BJ (cell line): ENCODE measurements at regions of chr7 and their contacts with region 1.

Region 1: DNA sequence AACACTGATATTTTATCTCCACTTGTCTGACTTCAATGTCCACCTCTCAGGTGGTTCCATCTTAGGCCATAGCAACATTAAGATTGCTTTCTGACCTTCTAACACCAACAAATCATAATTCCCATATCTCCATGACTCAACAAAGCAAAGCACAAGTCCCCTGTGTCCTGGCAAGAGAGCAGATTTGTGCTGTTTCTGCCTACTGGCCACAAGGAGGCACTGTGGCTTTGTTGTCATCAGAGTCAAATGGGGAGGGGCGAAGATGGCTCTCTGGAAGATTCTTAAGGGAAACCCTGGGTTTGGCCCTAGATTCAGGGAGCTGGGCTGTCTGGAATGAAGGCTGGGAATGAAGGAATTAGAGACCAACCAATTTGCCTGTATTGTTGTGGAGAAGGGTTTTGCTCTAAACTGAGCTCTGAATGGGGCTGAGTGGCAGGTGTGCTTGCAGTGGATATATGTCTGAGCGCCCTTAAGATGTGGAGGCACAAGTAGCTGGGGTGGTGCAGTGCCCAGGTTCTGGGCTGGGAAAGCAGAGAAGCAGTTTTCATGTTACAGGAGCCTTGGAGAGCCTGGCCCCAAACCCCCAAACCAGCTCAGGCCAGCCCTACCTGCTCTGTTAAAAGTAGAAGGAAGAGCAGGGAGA is 154.8 kb upstream of the PRSS58 start:
- DNase-seq: no peak
- H3K4me3 ChIP-seq: no peak overlapping the region
- H3K27me3 ChIP-seq: no peaks in the 10 kb centered on the region
- CTCF ChIP-seq: peak; percentile 75

Region 2: DNA sequence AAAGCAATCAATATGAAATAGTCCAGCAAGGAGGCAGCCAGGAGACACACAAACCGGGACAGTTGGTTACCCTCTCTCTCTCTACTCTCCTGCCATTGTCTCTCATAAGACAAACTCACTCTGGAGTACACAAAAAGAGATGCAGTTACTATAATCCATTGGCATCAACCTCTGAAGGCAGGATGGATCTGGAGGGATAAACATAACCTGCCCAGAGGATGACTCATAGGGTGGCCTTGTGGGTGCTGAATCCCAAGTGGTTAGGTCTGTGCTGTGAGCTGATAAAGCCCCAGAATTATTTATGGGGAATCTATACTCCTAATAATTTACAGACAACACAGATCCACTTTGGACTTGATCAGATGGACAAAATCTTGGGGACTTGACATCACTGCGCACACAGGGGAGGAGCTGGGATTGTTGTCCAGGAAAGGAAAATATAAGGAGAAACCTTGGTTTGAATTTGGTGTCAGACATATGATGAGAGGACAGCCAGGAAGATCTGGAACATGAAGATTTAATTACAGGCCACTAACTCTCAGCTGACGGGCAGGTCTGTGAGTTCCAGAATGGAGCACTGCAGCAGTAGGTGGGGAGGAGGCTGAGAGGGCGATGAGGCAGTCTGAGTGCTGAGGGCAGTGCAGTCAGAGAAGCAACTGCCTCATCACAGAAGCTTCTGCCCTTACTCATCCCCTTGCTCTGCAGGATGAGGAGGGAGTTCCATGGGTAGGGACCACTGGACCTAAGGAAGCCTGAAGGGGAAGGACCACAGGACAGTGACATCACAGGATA is 40.9 kb before region 1 on chr7:
- CTCF ChIA-PET with region 1: no interaction called
- POLR2A ChIA-PET with region 1: no interaction called
- DNase-seq: no peak
- H3K4me3 ChIP-seq: no peak overlapping the region
- H3K27me3 ChIP-seq: no peaks in the 10 kb centered on the region; the same call in 1 of the 2 replicates
- CTCF ChIP-seq: no peak

Region 3: GRCh38 chr7:142385491-142386340 is 27.0 kb before region 1 on chr7:
- CTCF ChIA-PET with region 1: interaction called, 19 read pairs
- POLR2A ChIA-PET with region 1: interaction called, 4 read pairs
- DNase-seq: no peak
- H3K4me3 ChIP-seq: no peak overlapping the region
- H3K27me3 ChIP-seq: peaks cover 2% of the 10 kb centered on the region
- CTCF ChIP-seq: peak; percentile 82

Region 4: GRCh38 chr7:142557971-142558582 is 145.4 kb after region 1 on chr7:
- CTCF ChIA-PET with region 1: no interaction called
- POLR2A ChIA-PET with region 1: no interaction called
- DNase-seq: no peak
- H3K4me3 ChIP-seq: no peak overlapping the region
- H3K27me3 ChIP-seq: no peaks in the 10 kb centered on the region
- CTCF ChIP-seq: peak; percentile 78

Region 5: GRCh38 chr7:142583386-142583785 is 170.7 kb after region 1 on chr7:
- CTCF ChIA-PET with region 1: no interaction called
- POLR2A ChIA-PET with region 1: no interaction called
- DNase-seq: no peak
- H3K4me3 ChIP-seq: no peak overlapping the region
- H3K27me3 ChIP-seq: no peaks in the 10 kb centered on the region
- CTCF ChIP-seq: no peak